RWPE1 (cell line): ENCODE measurements at regions of chr3 and their contacts with region 1.

Region 1: GRCh38 chr3:12135029-12135657 is 23.6 kb downstream of the TIMP4 start:
- DNase-seq: peak; percentile 55
- H3K27ac ChIP-seq: no peak overlapping the region
- CTCF ChIP-seq: peak; percentile 92

Region 2: DNA sequence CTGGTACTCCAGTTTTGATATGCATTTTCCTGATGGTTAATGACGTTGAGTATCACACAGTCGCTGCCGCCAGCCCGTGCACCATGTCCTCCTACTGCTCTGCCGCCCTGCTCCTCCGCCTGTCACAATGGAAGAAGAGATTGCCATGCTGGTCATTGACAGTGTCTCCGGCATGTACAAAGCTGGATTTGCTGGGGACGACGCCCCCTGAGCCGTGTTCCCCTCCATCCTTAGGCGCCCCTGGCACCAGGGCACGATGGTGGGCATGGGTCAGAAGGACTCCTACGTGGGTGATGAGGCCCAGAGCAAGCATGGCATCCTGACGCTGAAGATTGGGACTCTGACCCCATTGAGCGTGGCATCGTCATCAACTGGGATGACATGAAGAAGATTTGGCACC is 65.0 kb before region 1 on chr3:
- CTCF ChIA-PET with region 1: no interaction called
- POLR2A ChIA-PET with region 1: no interaction called
- DNase-seq: no peak
- H3K27ac ChIP-seq: no peak overlapping the region
- CTCF ChIP-seq: no peak

Region 3: DNA sequence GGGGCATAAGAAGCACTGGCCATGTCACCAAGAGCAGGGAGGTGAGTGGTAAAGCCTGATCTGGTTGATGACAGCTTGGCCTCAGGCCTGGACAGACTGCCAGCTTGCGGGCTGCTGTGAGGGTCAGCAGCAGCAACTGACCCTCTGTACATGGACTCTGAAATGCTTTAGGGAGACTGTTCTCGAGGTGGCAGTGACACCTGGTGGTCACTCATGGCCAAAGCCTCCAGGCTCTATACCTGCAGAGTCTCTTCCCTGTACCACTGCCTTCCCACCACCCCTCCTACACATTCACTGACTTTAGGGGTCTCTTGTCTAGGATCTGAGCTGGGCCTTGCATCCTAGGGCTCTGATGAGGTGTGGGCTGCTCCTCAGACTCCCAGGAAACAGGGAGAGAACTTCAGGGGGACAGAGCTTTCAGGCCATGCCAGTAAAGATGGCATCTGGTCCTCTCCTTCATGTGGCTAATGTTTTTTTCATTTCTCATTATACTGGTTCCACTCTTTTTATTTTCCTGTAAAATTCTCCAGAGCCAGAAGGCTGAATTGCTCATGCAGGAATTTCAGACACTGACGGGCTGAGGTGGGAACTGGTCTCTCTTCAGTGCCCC is 40.8 kb after region 1 on chr3:
- CTCF ChIA-PET with region 1: interaction called, 24 read pairs
- POLR2A ChIA-PET with region 1: no interaction called
- DNase-seq: peak; percentile 36
- H3K27ac ChIP-seq: no peak overlapping the region
- CTCF ChIP-seq: peak; percentile 73

Region 4: DNA sequence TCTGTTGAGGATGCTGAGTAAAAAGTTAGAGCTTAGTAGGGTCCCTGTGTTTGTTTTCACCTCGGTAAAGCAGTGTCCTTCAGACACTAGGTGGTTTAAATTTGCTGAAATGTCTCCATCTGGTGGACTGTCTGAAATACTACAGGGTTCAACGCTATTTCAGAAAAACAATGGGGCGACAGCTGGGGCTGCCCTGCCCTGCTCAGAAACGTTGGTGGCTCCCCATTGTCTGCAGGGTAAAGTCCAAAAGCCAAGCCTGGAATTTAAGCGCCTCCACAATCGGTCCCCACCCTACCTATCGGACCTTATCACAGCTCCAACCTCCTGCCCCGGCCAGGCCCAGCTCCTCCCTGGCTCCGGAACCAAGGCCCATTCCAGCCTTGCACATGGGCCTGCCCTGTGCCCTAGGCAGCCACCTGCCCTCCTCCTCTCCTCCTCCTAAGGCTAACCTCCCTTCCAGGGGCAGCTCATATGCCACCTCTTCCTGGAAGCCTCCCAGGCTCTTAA is 344.8 kb after region 1 on chr3:
- CTCF ChIA-PET with region 1: interaction called, 19 read pairs
- POLR2A ChIA-PET with region 1: no interaction called
- DNase-seq: peak; percentile 57
- H3K27ac ChIP-seq: no peak overlapping the region
- CTCF ChIP-seq: peak; percentile 73

Region 5: DNA sequence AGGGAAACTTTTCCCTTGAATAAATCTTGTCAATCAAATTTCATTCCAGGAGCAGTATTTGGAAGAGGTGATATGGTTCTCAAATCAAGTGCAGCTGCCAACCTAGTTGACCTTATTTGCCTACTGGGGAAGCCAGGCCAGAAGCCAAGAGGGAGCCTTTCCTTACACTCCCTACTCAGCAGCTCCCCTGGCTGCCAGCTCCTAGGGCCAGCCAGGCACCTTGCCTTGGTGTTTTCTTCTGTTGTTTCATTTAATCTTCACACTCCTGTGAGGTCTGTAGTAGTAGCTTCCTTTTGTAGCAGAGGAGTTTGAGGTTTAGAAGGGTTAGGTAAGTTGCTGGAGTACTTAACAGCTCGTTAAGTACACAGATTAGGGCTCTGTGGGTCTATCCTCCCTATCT is 387.6 kb after region 1 on chr3:
- CTCF ChIA-PET with region 1: no interaction called
- POLR2A ChIA-PET with region 1: interaction called, 11 read pairs
- DNase-seq: no peak
- H3K27ac ChIP-seq: no peak overlapping the region
- CTCF ChIP-seq: no peak